GM12878 (cell line): ENCODE measurements at regions of chr12 and their contacts with region 1.

Region 1: GRCh38 chr12:88111074-88111652 is 30.7 kb downstream of the CEP290 start:
- DNase-seq: peak; percentile 2
- ATAC-seq: no peak
- H3K4me3 ChIP-seq: no peak overlapping the region
- H3K27ac ChIP-seq: no peak overlapping the region
- H3K4me1 ChIP-seq: no peaks in the 10 kb centered on the region
- H3K27me3 ChIP-seq: no peaks in the 10 kb centered on the region
- CTCF ChIP-seq: peak; percentile 13 to 53 (median 35); a peak in 4 of 6 replicates
- EP300 ChIP-seq: no peak
- POLR2A ChIP-seq: no peak
- RAD21 ChIP-seq: peak; percentile 67

Region 2: GRCh38 chr12:87848248-87848868 is 262.8 kb before region 1 on chr12:
- CTCF ChIA-PET with region 1: no interaction called
- POLR2A ChIA-PET with region 1: no interaction called
- RAD21 ChIA-PET with region 1: no interaction called
- SMC1A ChIA-PET with region 1: no interaction called
- in situ Hi-C with region 1: no loop called
- intact Hi-C with region 1: no loop called
- DNase-seq: peak; percentile 12
- ATAC-seq: peak; percentile 74
- H3K4me3 ChIP-seq: no peak overlapping the region
- H3K27ac ChIP-seq: no peak overlapping the region
- H3K4me1 ChIP-seq: no peaks in the 10 kb centered on the region
- H3K27me3 ChIP-seq: no peaks in the 10 kb centered on the region; a peak in 1 of 4 replicates
- CTCF ChIP-seq: peak; percentile 60 to 72 (median 67); a peak in 5 of 6 replicates
- EP300 ChIP-seq: no peak
- POLR2A ChIP-seq: no peak
- RAD21 ChIP-seq: peak; percentile 81

Region 3: DNA sequence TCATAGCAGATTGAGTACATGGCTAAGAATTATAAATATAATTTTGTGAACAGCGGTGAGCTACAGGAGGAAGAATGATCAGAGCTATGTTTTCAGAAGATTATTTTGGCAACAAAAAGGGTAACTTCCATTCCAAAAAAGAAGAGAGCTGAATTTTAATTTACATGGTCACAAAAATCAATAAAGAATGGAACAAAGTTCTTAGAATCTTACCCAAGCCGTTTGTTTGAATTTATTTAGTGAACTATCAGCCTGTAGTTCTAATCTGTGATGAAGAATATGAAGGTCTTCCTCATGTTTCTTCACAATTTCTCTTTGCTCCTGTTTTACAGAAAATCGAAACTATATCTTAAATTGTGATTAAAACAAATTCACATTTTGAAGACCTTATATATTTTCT is 27.5 kb before region 1 on chr12:
- CTCF ChIA-PET with region 1: no interaction called
- POLR2A ChIA-PET with region 1: no interaction called
- RAD21 ChIA-PET with region 1: no interaction called
- SMC1A ChIA-PET with region 1: no interaction called
- in situ Hi-C with region 1: no loop called
- intact Hi-C with region 1: no loop called
- DNase-seq: no peak
- ATAC-seq: no peak
- H3K4me3 ChIP-seq: no peak overlapping the region
- H3K27ac ChIP-seq: no peak overlapping the region
- H3K4me1 ChIP-seq: no peaks in the 10 kb centered on the region
- H3K27me3 ChIP-seq: no peaks in the 10 kb centered on the region
- CTCF ChIP-seq: no peak
- EP300 ChIP-seq: no peak
- POLR2A ChIP-seq: no peak
- RAD21 ChIP-seq: no peak

Region 4: DNA sequence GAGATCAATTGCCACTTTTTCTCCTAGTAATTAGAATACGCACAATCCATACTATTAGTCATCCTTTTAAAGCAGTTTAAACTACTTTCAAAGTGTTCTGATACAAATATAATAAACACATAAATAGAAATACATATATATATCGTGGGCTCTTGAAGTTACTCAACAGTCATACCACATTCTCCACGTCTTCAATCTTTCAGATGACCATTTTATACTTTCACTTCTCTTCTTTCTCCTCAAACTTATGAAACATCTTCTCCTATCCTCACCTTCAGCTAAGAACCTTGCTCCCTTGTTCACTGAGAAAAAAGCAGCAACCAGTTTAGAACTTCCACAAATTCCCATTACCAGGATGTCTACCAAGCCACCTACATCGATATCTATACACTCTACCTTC is 11.5 kb after region 1 on chr12:
- CTCF ChIA-PET with region 1: interaction called, 12 read pairs
- POLR2A ChIA-PET with region 1: no interaction called
- RAD21 ChIA-PET with region 1: no interaction called
- SMC1A ChIA-PET with region 1: interaction called, 8 read pairs
- in situ Hi-C with region 1: no loop called
- intact Hi-C with region 1: no loop called
- DNase-seq: no peak
- ATAC-seq: no peak
- H3K4me3 ChIP-seq: no peak overlapping the region
- H3K27ac ChIP-seq: no peak overlapping the region
- H3K4me1 ChIP-seq: no peaks in the 10 kb centered on the region
- H3K27me3 ChIP-seq: no peaks in the 10 kb centered on the region
- CTCF ChIP-seq: no peak
- EP300 ChIP-seq: no peak
- POLR2A ChIP-seq: no peak
- RAD21 ChIP-seq: no peak

Region 5: DNA sequence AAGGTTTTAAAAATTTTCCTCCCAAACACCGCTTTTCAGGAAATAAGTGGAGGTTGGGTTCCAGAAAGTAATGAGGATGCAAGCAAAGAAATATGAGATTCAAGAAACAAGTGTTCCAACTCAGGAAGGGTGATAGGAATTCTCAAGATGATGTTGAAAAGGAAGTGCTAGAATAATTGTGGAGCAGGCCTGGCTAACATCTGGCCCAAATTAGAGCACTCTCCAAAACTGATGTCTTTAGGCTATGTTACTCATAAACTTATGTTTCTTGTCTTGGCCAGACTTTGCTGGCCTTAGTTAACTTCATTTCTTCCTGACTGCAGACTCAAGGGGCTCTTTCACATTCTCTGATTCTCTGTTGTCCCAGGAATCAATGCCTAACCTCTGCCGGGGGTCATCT is 147.2 kb after region 1 on chr12:
- CTCF ChIA-PET with region 1: no interaction called
- POLR2A ChIA-PET with region 1: no interaction called
- RAD21 ChIA-PET with region 1: no interaction called
- SMC1A ChIA-PET with region 1: no interaction called
- in situ Hi-C with region 1: no loop called
- intact Hi-C with region 1: no loop called
- DNase-seq: no peak
- ATAC-seq: no peak
- H3K4me3 ChIP-seq: no peak overlapping the region
- H3K27ac ChIP-seq: no peak overlapping the region
- H3K4me1 ChIP-seq: no peaks in the 10 kb centered on the region
- H3K27me3 ChIP-seq: no peaks in the 10 kb centered on the region
- CTCF ChIP-seq: no peak
- EP300 ChIP-seq: no peak
- POLR2A ChIP-seq: no peak
- RAD21 ChIP-seq: no peak

Region 6: DNA sequence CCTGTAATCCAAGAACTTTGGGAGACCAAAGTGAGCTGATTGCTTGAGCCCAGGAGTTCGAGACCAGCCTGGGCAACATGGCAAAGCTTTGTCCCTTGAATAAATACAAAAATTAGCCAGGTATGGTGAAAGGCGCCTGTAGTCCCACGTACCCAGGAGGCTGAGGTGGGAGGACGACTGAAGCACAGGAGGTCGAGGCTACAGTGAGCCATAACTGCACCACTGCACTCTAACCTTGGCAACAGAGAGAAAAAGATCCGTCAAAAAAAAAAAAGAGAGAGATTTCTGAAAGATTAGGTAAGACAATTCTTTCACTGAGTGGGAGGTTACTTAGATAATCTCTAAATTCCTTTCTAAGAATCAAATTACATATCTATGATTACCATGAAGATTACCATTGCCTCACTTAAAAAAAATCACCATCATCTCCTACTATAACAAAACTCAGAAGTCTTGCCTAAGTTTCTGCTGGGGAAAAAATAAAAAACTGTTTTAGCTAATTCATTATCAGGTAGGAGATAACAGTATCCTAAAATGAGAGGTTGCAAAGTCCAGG is 874.4 kb after region 1 on chr12:
- CTCF ChIA-PET with region 1: no interaction called
- POLR2A ChIA-PET with region 1: no interaction called
- RAD21 ChIA-PET with region 1: no interaction called
- SMC1A ChIA-PET with region 1: no interaction called
- in situ Hi-C with region 1: loop called (anchors 10 kb)
- intact Hi-C with region 1: no loop called
- DNase-seq: no peak
- ATAC-seq: no peak
- H3K4me3 ChIP-seq: no peak overlapping the region
- H3K27ac ChIP-seq: no peak overlapping the region
- H3K4me1 ChIP-seq: no peaks in the 10 kb centered on the region
- H3K27me3 ChIP-seq: no peaks in the 10 kb centered on the region
- CTCF ChIP-seq: no peak
- EP300 ChIP-seq: no peak
- POLR2A ChIP-seq: no peak
- RAD21 ChIP-seq: no peak